ENCODE measurements at regions of chr17 and their contacts with region 1.

Region 1: GRCh38 chr17:27601069-27601975 is 29.7 kb upstream of the LGALS9 start:
- DNase-seq: peak; percentile 87
- H3K4me3 ChIP-seq: no peak overlapping the region
- H3K27ac ChIP-seq: no peak overlapping the region
- H3K4me1 ChIP-seq: peaks cover 14% of the 10 kb centered on the region
- H3K27me3 ChIP-seq: no peaks in the 10 kb centered on the region
- CTCF ChIP-seq: peak; percentile 82 to 92
- POLR2A ChIP-seq: no peak

Region 2: GRCh38 chr17:27199948-27200347 is 401.4 kb before region 1 on chr17:
- CTCF ChIA-PET with region 1: interaction called, 20 read pairs
- POLR2A ChIA-PET with region 1: no interaction called
- dilution Hi-C with region 1: no loop called
- intact Hi-C with region 1: loop called (anchors 1 kb)
- DNase-seq: peak; percentile 10
- H3K4me3 ChIP-seq: no peak overlapping the region
- H3K27ac ChIP-seq: no peak overlapping the region
- H3K4me1 ChIP-seq: peaks cover 5% of the 10 kb centered on the region
- H3K27me3 ChIP-seq: no peaks in the 10 kb centered on the region
- CTCF ChIP-seq: no peak
- POLR2A ChIP-seq: no peak

Region 3: GRCh38 chr17:27265333-27265732 is 336.0 kb before region 1 on chr17:
- CTCF ChIA-PET with region 1: no interaction called
- POLR2A ChIA-PET with region 1: no interaction called
- dilution Hi-C with region 1: no loop called
- intact Hi-C with region 1: no loop called
- DNase-seq: peak; percentile 93
- H3K4me3 ChIP-seq: no peak overlapping the region
- H3K27ac ChIP-seq: peak overlapping the region; percentile 55
- H3K4me1 ChIP-seq: peaks cover 33% of the 10 kb centered on the region
- H3K27me3 ChIP-seq: peaks cover 0 to 4% of the 10 kb centered on the region in 2 experiments
- CTCF ChIP-seq: no peak
- POLR2A ChIP-seq: peak; percentile 63

Region 4: DNA sequence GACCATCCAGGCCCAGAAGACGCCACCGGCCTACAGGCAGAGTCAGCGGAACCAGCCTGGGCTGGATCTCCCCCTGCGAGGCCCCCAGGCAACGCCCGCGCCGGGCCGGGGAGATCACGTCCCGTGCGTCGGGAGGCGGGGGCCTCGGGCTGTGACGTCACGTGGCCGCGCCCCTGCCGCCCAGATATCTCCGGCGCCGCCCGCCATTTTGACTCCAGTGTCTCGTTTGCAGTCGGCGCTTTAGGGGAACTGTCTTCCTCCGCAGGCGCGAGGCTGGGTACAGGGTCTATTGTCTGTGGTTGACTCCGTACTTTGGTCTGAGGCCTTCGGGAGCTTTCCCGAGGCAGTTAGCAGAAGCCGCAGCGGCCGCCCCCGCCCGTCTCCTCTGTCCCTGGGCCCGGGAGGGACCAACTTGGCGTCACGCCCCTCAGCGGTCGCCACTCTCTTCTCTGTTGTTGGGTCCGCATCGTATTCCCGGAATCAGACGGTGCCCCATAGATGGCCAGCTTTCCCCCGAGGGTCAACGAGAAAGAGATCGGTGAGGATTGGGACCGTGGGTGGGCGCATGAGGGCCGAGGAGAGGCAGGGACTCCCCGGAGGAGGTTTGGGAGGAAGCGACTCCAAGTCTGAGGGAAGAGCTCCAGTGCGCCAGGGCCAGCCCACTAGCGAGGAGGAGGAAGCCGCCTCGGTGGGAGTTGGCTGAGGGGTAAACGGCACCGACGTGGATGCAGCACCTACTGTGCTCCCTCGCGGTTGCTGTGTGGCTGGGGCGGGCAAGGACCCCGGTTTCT is 307.2 kb before region 1 on chr17 and contains the start of gene WSB1:
- CTCF ChIA-PET with region 1: interaction called, 11 read pairs
- POLR2A ChIA-PET with region 1: no interaction called
- dilution Hi-C with region 1: no loop called
- intact Hi-C with region 1: loop called (anchors 1 kb)
- DNase-seq: peak; percentile 90
- H3K4me3 ChIP-seq: peak within 1 kb of the TSS; percentile 45 to 96 (median 86)
- H3K27ac ChIP-seq: peak within 1 kb of the TSS; percentile 94
- H3K4me1 ChIP-seq: peaks cover 14% of the 10 kb centered on the region
- H3K27me3 ChIP-seq: no peaks in the 10 kb centered on the region
- CTCF ChIP-seq: no peak
- POLR2A ChIP-seq: peak; percentile 99
- total RNA-seq, gene WSB1: 334 and 471 TPM in 2 replicates

Region 5: GRCh38 chr17:27332485-27333409 is 268.6 kb before region 1 on chr17:
- CTCF ChIA-PET with region 1: interaction called, 24 read pairs
- POLR2A ChIA-PET with region 1: no interaction called
- dilution Hi-C with region 1: no loop called
- intact Hi-C with region 1: loop called (anchors 1 kb)
- DNase-seq: peak; percentile 98
- H3K4me3 ChIP-seq: peak overlapping the region; percentile 3 to 65 (median 17)
- H3K27ac ChIP-seq: peak overlapping the region; percentile 78
- H3K4me1 ChIP-seq: peaks cover 16% of the 10 kb centered on the region
- H3K27me3 ChIP-seq: no peaks in the 10 kb centered on the region
- CTCF ChIP-seq: peak; percentile 91 to 97
- POLR2A ChIP-seq: peak; percentile 39

Region 6: GRCh38 chr17:27430882-27431491 is 170.3 kb before region 1 on chr17:
- CTCF ChIA-PET with region 1: interaction called, 26 read pairs
- POLR2A ChIA-PET with region 1: no interaction called
- dilution Hi-C with region 1: no loop called
- intact Hi-C with region 1: loop called (anchors 1 kb)
- DNase-seq: peak; percentile 74
- H3K4me3 ChIP-seq: no peak overlapping the region
- H3K27ac ChIP-seq: no peak overlapping the region
- H3K4me1 ChIP-seq: no peaks in the 10 kb centered on the region
- H3K27me3 ChIP-seq: no peaks in the 10 kb centered on the region
- CTCF ChIP-seq: peak; percentile 82 to 93
- POLR2A ChIP-seq: no peak

Region 7: DNA sequence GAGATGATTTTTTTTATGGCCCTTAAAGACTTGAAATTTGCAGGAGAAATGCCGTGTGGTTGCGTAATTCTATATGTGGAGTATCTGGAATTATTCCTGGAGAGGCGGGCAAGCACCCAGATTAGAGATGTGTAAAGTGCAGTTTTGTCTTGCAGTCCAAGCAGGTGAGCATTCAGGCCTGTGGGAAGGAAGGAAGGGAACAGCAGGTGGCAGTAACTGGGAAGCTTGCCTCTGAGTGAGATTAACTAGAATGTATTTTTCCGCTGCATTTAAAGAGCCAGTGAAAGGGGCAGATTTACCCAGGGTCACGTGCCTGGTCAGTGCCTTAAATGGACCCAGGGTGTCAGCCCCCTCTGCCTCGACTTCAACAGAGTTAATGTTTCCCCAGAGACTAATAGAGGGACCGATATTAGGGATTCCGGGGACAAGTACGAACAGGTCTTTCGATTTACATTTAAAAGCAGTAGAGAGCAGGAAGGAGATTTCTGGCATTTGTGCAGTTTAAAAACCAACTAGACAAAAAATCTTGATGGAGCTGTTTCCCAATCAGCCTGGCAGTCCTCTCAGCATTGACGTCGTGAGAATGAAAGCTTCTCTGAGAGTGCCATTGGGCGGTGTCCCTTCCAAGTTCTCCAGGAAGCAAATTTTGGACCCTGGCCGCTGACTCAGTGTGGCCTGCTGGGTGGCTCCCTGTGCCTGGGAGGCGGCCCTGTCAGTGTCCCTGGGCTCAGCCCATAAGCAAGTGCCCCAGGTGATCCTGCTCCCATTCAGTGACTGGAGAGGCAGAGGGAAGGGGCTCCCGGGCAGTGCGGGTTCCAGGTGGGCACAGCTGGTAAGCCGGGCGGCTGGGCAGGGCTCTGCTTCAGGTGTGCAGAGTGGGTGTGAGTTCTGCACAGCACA is 106.9 kb before region 1 on chr17:
- CTCF ChIA-PET with region 1: interaction called, 11 read pairs
- POLR2A ChIA-PET with region 1: no interaction called
- dilution Hi-C with region 1: no loop called
- intact Hi-C with region 1: no loop called
- DNase-seq: peak; percentile 30
- H3K4me3 ChIP-seq: no peak overlapping the region
- H3K27ac ChIP-seq: no peak overlapping the region
- H3K4me1 ChIP-seq: peaks cover 6% of the 10 kb centered on the region
- H3K27me3 ChIP-seq: no peaks in the 10 kb centered on the region
- CTCF ChIP-seq: no peak
- POLR2A ChIP-seq: no peak

Region 8: GRCh38 chr17:27586203-27586721 is 15.1 kb before region 1 on chr17:
- CTCF ChIA-PET with region 1: interaction called, 11 read pairs
- POLR2A ChIA-PET with region 1: no interaction called
- dilution Hi-C with region 1: no loop called
- intact Hi-C with region 1: no loop called
- DNase-seq: no peak
- H3K4me3 ChIP-seq: no peak overlapping the region
- H3K27ac ChIP-seq: no peak overlapping the region
- H3K4me1 ChIP-seq: no peaks in the 10 kb centered on the region
- H3K27me3 ChIP-seq: no peaks in the 10 kb centered on the region
- CTCF ChIP-seq: no peak
- POLR2A ChIP-seq: no peak

Measured in endothelial cell of umbilical vein (primary cell).